ENCODE measurements at regions of chr11 and their contacts with region 1.

Region 1: GRCh38 chr11:121194731-121195596 is 93.9 kb downstream of the TECTA start:
- DNase-seq: peak; percentile 70
- H3K4me3 Mint-ChIP-seq: no peak overlapping the region
- H3K27ac Mint-ChIP-seq: no peak overlapping the region
- H3K4me1 Mint-ChIP-seq: no peaks in the 10 kb centered on the region
- H3K27me3 Mint-ChIP-seq: peaks cover 81% of the 10 kb centered on the region
- CTCF ChIP-seq: peak; percentile 87

Region 2: DNA sequence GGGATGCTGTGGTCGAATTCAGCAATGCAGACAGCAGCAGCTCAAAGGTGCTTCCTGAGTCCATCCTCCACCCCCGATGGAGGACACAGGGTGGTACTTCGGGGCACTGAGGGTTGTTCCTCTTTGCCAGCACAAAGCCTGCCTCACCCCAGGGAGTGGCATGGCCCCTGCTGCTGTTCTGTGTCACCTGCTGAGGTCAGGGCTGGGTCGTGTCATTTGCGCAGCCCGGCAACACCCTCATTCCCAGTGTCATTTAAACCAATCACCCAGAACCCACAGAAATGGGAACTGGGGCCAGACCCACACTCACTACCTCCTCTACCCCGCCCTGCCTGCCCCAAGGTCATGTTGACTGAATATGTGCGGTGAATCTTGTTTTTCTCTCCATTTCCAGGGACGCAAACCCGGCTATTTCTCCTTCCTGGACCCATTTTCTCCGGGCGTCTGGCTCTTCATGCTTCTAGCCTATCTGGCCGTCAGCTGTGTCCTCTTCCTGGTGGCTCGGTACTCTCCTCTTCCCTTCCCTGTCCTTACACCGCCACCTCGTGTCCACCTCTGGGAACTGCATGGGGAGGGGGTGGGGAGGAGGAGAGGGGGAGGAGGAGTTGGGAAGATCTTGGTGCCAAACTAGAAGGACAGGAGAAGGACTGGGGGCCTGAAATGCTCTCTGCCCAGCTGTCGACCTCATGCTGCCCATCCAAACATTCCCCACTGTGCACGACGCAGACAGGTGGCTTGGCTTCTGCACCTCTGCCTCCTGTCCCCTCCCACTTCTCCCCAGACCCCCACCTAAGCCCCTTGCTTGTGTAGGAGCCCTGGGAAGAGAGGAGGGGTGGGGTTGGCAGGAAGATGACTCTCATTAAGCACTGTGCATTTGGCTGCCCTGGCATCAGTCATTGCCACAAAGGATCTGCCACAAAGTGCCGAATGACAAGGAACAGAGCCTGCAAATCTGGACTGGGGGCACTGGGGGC is 242.2 kb before region 1 on chr11:
- CTCF ChIA-PET with region 1: interaction called, 3 read pairs
- POLR2A ChIA-PET with region 1: no interaction called
- intact Hi-C with region 1: loop called (anchors 10 kb)
- DNase-seq: peak; percentile 81
- H3K4me3 Mint-ChIP-seq: peak overlapping the region; percentile 49
- H3K27ac Mint-ChIP-seq: no peak overlapping the region
- H3K4me1 Mint-ChIP-seq: peaks cover 6% of the 10 kb centered on the region
- H3K27me3 Mint-ChIP-seq: peaks cover 54% of the 10 kb centered on the region
- CTCF ChIP-seq: peak; percentile 76

Region 3: GRCh38 chr11:121123496-121124069 is 71.4 kb before region 1 on chr11:
- CTCF ChIA-PET with region 1: interaction called, 10 read pairs
- POLR2A ChIA-PET with region 1: no interaction called
- intact Hi-C with region 1: no loop called
- DNase-seq: no peak
- H3K4me3 Mint-ChIP-seq: no peak overlapping the region
- H3K27ac Mint-ChIP-seq: no peak overlapping the region
- H3K4me1 Mint-ChIP-seq: no peaks in the 10 kb centered on the region
- H3K27me3 Mint-ChIP-seq: peaks cover 22% of the 10 kb centered on the region
- CTCF ChIP-seq: no peak

Region 4: DNA sequence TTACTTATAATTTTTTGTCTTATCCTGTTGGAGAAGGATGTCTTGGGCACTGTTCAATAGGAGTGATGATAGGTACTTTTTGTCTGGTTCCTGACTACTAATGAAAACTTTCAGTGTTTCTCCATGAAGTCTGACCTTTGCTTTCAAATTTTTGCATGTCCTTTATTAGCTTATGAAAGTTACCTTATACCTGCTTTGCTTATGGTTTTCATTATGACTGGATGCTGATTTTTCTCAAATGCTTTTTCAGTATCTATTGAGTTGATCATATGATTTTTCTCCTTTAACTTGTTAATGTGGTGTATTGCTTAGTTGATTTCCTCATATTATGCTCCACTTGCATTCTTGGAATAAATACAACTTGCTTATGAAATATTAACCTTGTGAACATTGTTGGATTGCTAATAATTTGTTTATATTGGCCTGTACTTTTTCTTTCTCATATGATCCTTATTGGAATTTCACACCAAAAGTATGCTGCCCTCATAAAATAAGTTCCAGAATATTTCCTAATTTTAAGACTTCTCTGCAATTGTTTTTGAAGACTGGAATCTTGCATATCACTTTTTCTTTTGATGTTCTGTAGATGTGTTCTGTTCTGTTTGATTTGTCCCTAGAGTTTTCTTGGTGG is 12.6 kb after region 1 on chr11:
- CTCF ChIA-PET with region 1: interaction called, 20 read pairs
- POLR2A ChIA-PET with region 1: interaction called, 3 read pairs
- intact Hi-C with region 1: no loop called
- DNase-seq: peak; percentile 20
- H3K4me3 Mint-ChIP-seq: no peak overlapping the region
- H3K27ac Mint-ChIP-seq: no peak overlapping the region
- H3K4me1 Mint-ChIP-seq: peaks cover 8% of the 10 kb centered on the region
- H3K27me3 Mint-ChIP-seq: peaks cover 52% of the 10 kb centered on the region
- CTCF ChIP-seq: no peak